Pancreas (tissue), 10 donors: ENCODE measurements at regions of chr3 and their contacts with region 1.

Region 1: GRCh38 chr3:126659945-126660886 is 5.3 kb upstream of the TXNRD3 start:
- DNase-seq: no peak
- ATAC-seq: no peak
- H3K4me3 ChIP-seq: no peak overlapping the region
- H3K27ac ChIP-seq: no peak overlapping the region
- H3K4me1 ChIP-seq: no peaks in the 10 kb centered on the region
- H3K27me3 ChIP-seq: peaks cover 0 to 7% (median 0%) of the 10 kb centered on the region in 4 donors
- CTCF ChIP-seq: no peak

Region 2: DNA sequence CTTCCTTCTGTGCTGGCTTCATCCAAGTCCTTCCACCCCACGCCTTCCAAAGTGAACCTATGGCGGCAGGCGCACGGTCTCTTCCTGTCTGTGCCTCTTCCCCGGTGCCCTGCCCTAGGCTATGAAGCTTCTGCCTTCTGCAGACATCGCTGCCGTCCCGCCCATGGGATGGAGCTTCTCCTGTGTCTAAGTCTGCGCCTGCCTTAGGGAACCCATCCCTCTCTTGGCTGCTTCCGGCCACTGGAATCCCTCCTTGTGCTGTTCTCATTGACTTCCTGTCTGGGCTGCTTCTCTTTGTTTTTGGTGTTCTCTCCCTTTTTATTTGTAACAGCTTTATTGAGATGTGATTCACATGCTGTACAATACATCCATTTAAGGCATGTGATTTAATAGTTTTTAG is 61.0 kb after region 1 on chr3:
- intact Hi-C with region 1: no loop called
- DNase-seq: no peak
- ATAC-seq: no peak
- H3K4me3 ChIP-seq: no peak overlapping the region
- H3K27ac ChIP-seq: no peak overlapping the region
- H3K4me1 ChIP-seq: no peaks in the 10 kb centered on the region
- H3K27me3 ChIP-seq: no peaks in the 10 kb centered on the region
- CTCF ChIP-seq: no peak

Region 3: GRCh38 chr3:127064521-127065427 is 404.6 kb after region 1 on chr3:
- intact Hi-C with region 1: no loop called
- DNase-seq: peak in 1 of 6 donors; percentile 36
- ATAC-seq: peak in 2 of 4 donors; percentile 35 to 47
- H3K4me3 ChIP-seq: no peak overlapping the region
- H3K27ac ChIP-seq: no peak overlapping the region
- H3K4me1 ChIP-seq: no peaks in the 10 kb centered on the region
- H3K27me3 ChIP-seq: no peaks in the 10 kb centered on the region
- CTCF ChIP-seq: no peak

Region 4: GRCh38 chr3:127544192-127544802 is 884.1 kb after region 1 on chr3:
- intact Hi-C with region 1: loop called in 1 of 3 experiments (anchors 10 kb)
- DNase-seq: peak; percentile 51 to 84 (median 74)
- ATAC-seq: peak; percentile 42 to 73 (median 60)
- H3K4me3 ChIP-seq: no peak overlapping the region
- H3K27ac ChIP-seq: no peak overlapping the region
- H3K4me1 ChIP-seq: no peaks in the 10 kb centered on the region
- H3K27me3 ChIP-seq: no peaks in the 10 kb centered on the region
- CTCF ChIP-seq: peak; percentile 75 to 87 (median 78)